ENCODE measurements at regions of chr21 and their contacts with region 1.

Region 1: GRCh38 chr21:15749082-15749860 is 19.5 kb downstream of the USP25 start:
- DNase-seq: no peak
- ATAC-seq: no peak
- H3K4me3 ChIP-seq: no peak overlapping the region
- H3K4me3 Mint-ChIP-seq: no peak overlapping the region
- H3K27ac ChIP-seq: no peak overlapping the region
- H3K27ac Mint-ChIP-seq: no peak overlapping the region
- H3K4me1 ChIP-seq: peaks cover 40% of the 10 kb centered on the region
- H3K4me1 Mint-ChIP-seq: peaks cover 74% of the 10 kb centered on the region
- H3K27me3 ChIP-seq: no peaks in the 10 kb centered on the region
- H3K27me3 Mint-ChIP-seq: no peaks in the 10 kb centered on the region
- CTCF ChIP-seq: no peak

Region 2: GRCh38 chr21:14977814-14978213 is 771.5 kb before region 1 on chr21:
- CTCF ChIA-PET with region 1: no interaction called
- POLR2A ChIA-PET with region 1: no interaction called
- intact Hi-C with region 1: no loop called
- DNase-seq: no peak
- ATAC-seq: no peak
- H3K4me3 ChIP-seq: no peak overlapping the region
- H3K4me3 Mint-ChIP-seq: no peak overlapping the region
- H3K27ac ChIP-seq: no peak overlapping the region
- H3K27ac Mint-ChIP-seq: no peak overlapping the region
- H3K4me1 ChIP-seq: no peaks in the 10 kb centered on the region
- H3K4me1 Mint-ChIP-seq: peaks cover 11% of the 10 kb centered on the region
- H3K27me3 ChIP-seq: no peaks in the 10 kb centered on the region
- H3K27me3 Mint-ChIP-seq: no peaks in the 10 kb centered on the region
- CTCF ChIP-seq: no peak

Region 3: GRCh38 chr21:15761507-15762100 is 12.3 kb after region 1 on chr21:
- CTCF ChIA-PET with region 1: no interaction called
- POLR2A ChIA-PET with region 1: interaction called, 3 read pairs
- intact Hi-C with region 1: loop called in 1 of 2 experiments (anchors 1 kb)
- DNase-seq: no peak
- ATAC-seq: no peak
- H3K4me3 ChIP-seq: no peak overlapping the region
- H3K4me3 Mint-ChIP-seq: no peak overlapping the region
- H3K27ac ChIP-seq: no peak overlapping the region
- H3K27ac Mint-ChIP-seq: peak overlapping the region; percentile 25
- H3K4me1 ChIP-seq: peaks cover 14% of the 10 kb centered on the region
- H3K4me1 Mint-ChIP-seq: peaks cover 79% of the 10 kb centered on the region
- H3K27me3 ChIP-seq: no peaks in the 10 kb centered on the region
- H3K27me3 Mint-ChIP-seq: no peaks in the 10 kb centered on the region
- CTCF ChIP-seq: no peak

Region 4: GRCh38 chr21:15976807-15977206 is 227.5 kb after region 1 on chr21:
- CTCF ChIA-PET with region 1: no interaction called
- POLR2A ChIA-PET with region 1: no interaction called
- intact Hi-C with region 1: no loop called
- DNase-seq: no peak
- ATAC-seq: no peak
- H3K4me3 ChIP-seq: no peak overlapping the region
- H3K4me3 Mint-ChIP-seq: no peak overlapping the region
- H3K27ac ChIP-seq: no peak overlapping the region
- H3K27ac Mint-ChIP-seq: no peak overlapping the region
- H3K4me1 ChIP-seq: no peaks in the 10 kb centered on the region
- H3K4me1 Mint-ChIP-seq: no peaks in the 10 kb centered on the region
- H3K27me3 ChIP-seq: no peaks in the 10 kb centered on the region
- H3K27me3 Mint-ChIP-seq: no peaks in the 10 kb centered on the region
- CTCF ChIP-seq: no peak

Measured in CD8-positive, alpha-beta T cell (primary cell).